ENCODE measurements at regions of chr7 and their contacts with region 1.

Region 1: GRCh38 chr7:134316539-134317344 is at the start of gene SLC35B4:
- DNase-seq: peak; percentile 90 to 96 (median 93)
- H3K4me3 ChIP-seq: peak within 1 kb of the TSS; percentile 2 to 81
- H3K4me3 Mint-ChIP-seq: peak within 1 kb of the TSS; percentile 95 to 98 (median 96)
- H3K27ac ChIP-seq: peak within 1 kb of the TSS; percentile 59
- H3K27ac Mint-ChIP-seq: peak within 1 kb of the TSS; percentile 83 to 97 (median 92)
- H3K4me1 ChIP-seq: peaks cover 17% of the 10 kb centered on the region
- H3K4me1 Mint-ChIP-seq: peaks cover 12 to 24% (median 17%) of the 10 kb centered on the region in 4 donors
- H3K27me3 ChIP-seq: no peaks in the 10 kb centered on the region
- H3K27me3 Mint-ChIP-seq: peaks cover 2% of the 10 kb centered on the region in 2 donors
- total RNA-seq, gene SLC35B4: 10.5 to 10.7 TPM

Region 2: DNA sequence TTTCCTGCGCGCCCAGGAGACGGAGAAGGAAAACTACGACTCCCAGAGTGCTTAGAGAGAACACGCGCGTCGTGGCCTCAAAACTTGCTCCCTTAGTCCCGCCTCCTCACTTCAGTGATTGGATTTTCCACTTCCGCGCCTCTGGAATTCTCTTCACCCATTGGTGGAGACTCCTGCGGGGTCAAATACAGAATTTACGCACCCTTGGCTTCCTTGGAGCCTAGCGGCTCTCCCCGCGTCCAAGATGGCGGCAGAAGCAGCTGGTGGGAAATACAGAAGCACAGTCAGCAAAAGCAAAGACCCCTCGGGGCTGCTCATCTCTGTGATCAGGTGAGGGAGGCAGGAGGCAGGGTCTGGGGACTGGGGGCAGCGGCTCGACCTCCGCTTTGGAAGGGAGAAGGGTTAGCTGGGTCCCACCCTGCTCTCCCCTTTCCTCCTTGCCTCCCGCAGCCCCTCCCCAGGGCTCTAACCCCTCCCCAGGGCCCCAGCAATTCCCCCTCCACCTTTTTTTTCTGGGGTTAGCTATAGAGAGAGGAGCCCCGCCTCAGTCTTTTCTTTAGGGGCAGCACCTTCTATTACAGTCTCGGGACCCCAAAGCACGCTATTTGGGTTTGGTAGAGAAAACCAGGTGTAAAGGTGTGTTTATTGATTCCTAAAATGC is 1063.8 kb before region 1 on chr7 and contains the start of gene EXOC4:
- CTCF ChIA-PET with region 1: no interaction called
- POLR2A ChIA-PET with region 1: no interaction called
- intact Hi-C with region 1: loop called (anchors 2 kb)
- DNase-seq: peak; percentile 95 to 97 (median 96)
- H3K4me3 ChIP-seq: peak within 1 kb of the TSS; percentile 73 to 97
- H3K4me3 Mint-ChIP-seq: peak within 1 kb of the TSS; percentile 93 to 97 (median 96)
- H3K27ac ChIP-seq: peak within 1 kb of the TSS; percentile 82
- H3K27ac Mint-ChIP-seq: peak within 1 kb of the TSS; percentile 83 to 98 (median 97)
- H3K4me1 ChIP-seq: peaks cover 25% of the 10 kb centered on the region
- H3K4me1 Mint-ChIP-seq: peaks cover 25 to 48% (median 36%) of the 10 kb centered on the region in 4 donors
- H3K27me3 ChIP-seq: no peaks in the 10 kb centered on the region
- H3K27me3 Mint-ChIP-seq: no peaks in the 10 kb centered on the region
- total RNA-seq, gene EXOC4: 68.9 to 81.2 TPM

Region 3: DNA sequence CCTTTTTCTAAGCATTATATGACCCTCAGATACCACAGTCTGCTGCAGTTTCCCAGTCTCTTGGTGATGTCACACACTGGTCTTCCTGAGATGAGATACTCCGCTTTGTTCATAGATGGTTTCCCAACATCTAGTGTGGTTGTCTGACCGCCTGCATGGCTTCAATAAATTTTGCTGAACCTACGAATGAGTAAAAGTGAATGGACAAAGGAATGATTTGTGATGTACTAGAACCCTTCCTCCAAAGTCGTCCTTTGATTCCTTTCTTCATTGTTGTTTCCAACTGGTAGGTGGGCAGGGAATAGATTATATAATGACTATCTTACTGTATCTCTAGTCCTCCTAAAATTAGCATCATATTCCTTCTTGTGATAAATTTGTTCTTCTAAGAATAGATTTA is 82.5 kb before region 1 on chr7:
- CTCF ChIA-PET with region 1: no interaction called
- POLR2A ChIA-PET with region 1: no interaction called
- intact Hi-C with region 1: no loop called
- DNase-seq: no peak
- H3K4me3 ChIP-seq: no peak overlapping the region
- H3K4me3 Mint-ChIP-seq: no peak overlapping the region
- H3K27ac ChIP-seq: no peak overlapping the region
- H3K27ac Mint-ChIP-seq: no peak overlapping the region
- H3K4me1 ChIP-seq: no peaks in the 10 kb centered on the region
- H3K4me1 Mint-ChIP-seq: no peaks in the 10 kb centered on the region
- H3K27me3 ChIP-seq: no peaks in the 10 kb centered on the region
- H3K27me3 Mint-ChIP-seq: peaks cover 6 to 8% of the 10 kb centered on the region in 2 donors

Region 4: DNA sequence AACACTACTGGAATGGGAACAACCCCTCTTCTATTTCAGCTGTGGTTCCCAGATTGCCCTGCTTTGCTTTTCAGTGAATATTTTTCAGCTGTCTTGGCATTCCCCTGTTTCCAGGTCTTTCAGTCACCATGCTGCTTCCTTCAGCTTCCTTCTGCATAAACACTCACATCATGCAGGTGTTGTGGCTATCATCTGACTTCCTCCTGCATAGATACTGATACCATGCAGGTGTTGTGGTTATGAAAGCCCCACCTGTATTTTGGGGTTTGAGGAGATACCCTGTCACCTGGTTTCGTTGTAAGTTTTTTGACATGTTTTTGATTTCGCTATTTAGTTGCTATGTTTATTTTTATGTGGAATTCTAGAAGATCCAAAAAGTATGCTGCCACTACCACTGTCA is 71.5 kb before region 1 on chr7:
- CTCF ChIA-PET with region 1: no interaction called
- POLR2A ChIA-PET with region 1: no interaction called
- intact Hi-C with region 1: no loop called
- DNase-seq: no peak
- H3K4me3 ChIP-seq: no peak overlapping the region
- H3K4me3 Mint-ChIP-seq: no peak overlapping the region
- H3K27ac ChIP-seq: no peak overlapping the region
- H3K27ac Mint-ChIP-seq: no peak overlapping the region
- H3K4me1 ChIP-seq: no peaks in the 10 kb centered on the region
- H3K4me1 Mint-ChIP-seq: no peaks in the 10 kb centered on the region
- H3K27me3 ChIP-seq: no peaks in the 10 kb centered on the region
- H3K27me3 Mint-ChIP-seq: peaks cover 0 to 10% of the 10 kb centered on the region in 2 donors

Region 5: GRCh38 chr7:134276951-134277350 is 39.8 kb before region 1 on chr7:
- CTCF ChIA-PET with region 1: no interaction called
- POLR2A ChIA-PET with region 1: no interaction called
- intact Hi-C with region 1: no loop called
- DNase-seq: no peak
- H3K4me3 ChIP-seq: no peak overlapping the region
- H3K4me3 Mint-ChIP-seq: no peak overlapping the region
- H3K27ac ChIP-seq: no peak overlapping the region
- H3K27ac Mint-ChIP-seq: no peak overlapping the region
- H3K4me1 ChIP-seq: no peaks in the 10 kb centered on the region
- H3K4me1 Mint-ChIP-seq: peaks cover 0 to 4% (median 1%) of the 10 kb centered on the region in 4 donors
- H3K27me3 ChIP-seq: no peaks in the 10 kb centered on the region
- H3K27me3 Mint-ChIP-seq: peaks cover 18 to 19% of the 10 kb centered on the region in 2 donors

Region 6: DNA sequence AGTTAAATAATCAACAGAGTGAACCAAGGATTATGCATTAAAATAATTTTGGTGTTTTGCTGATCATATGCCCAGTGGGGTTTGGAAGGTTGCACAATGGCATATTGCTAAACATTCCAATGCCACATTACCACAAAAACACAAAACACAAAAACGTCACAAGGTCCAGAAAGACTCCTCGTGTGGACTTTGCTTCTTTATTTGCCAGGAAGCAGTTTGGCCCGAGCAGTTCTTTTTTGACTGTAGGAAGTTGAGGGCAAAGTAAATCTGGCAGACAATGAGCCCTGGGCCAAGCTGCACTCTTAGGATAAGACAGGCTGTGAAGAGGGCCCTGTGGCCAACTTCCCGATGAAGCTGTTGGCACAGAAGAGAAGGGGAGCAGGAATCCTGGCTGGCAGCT is 39.2 kb after region 1 on chr7:
- CTCF ChIA-PET with region 1: interaction called, 4 read pairs
- POLR2A ChIA-PET with region 1: no interaction called
- intact Hi-C with region 1: loop called (anchors 1 kb)
- DNase-seq: no peak
- H3K4me3 ChIP-seq: no peak overlapping the region
- H3K4me3 Mint-ChIP-seq: no peak overlapping the region
- H3K27ac ChIP-seq: no peak overlapping the region
- H3K27ac Mint-ChIP-seq: peak overlapping the region in 1 of 7 donors; percentile 38
- H3K4me1 ChIP-seq: no peaks in the 10 kb centered on the region
- H3K4me1 Mint-ChIP-seq: peaks cover 0 to 2% (median 0%) of the 10 kb centered on the region in 4 donors
- H3K27me3 ChIP-seq: no peaks in the 10 kb centered on the region
- H3K27me3 Mint-ChIP-seq: peaks cover 4 to 5% of the 10 kb centered on the region in 2 donors

Region 7: DNA sequence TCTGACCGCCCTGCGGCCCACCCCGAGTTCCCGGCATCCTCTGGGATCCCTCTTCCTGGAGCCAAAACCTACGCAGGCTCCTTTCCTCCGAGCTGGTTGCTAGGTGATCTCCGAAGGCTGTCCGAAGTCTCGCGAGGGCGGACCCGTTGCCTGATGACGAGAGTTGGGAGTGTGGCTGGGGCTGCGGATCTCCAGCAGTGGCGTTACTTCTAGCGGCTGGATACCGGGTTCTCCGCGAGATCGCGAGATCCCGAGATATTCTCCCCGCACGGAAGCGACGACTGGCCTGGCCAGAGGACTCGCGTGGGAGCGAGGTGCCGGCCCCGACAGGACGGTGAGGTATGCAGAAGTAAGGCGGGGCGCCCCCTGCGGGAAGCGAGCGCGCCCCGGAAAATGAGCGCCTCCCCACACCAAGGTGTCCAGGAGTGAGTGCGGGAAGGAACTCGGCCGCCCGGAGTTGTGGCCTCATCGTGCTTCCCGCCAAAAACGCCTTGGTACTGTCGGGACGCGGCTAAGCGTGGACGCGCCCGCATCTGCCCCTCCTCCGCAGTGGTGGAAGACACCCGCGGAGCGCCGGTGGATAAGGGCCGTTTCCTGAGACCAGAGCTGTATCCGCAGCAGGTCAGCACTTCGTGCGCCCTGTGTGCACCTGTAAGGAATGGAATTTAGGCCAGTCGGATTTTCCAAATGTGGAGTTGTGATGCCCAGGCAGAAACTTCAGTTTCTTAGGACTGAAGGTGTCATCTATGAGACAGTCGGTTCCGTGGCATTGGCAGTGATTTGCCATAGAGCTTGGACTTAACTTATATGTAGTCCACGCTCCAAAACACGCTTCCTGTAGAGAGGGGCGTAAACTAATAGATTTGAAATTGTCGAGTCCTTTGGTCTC is 669.9 kb after region 1 on chr7 and contains the start of gene AGBL3:
- CTCF ChIA-PET with region 1: interaction called, 4 read pairs
- POLR2A ChIA-PET with region 1: no interaction called
- intact Hi-C with region 1: loop called (anchors 1 kb)
- DNase-seq: peak; percentile 87 to 91 (median 88)
- H3K4me3 ChIP-seq: peak within 1 kb of the TSS; percentile 60 to 86
- H3K4me3 Mint-ChIP-seq: peak within 1 kb of the TSS; percentile 96 to 99 (median 98)
- H3K27ac ChIP-seq: peak within 1 kb of the TSS; percentile 80
- H3K27ac Mint-ChIP-seq: peak within 1 kb of the TSS; percentile 98 to 100 (median 98)
- H3K4me1 ChIP-seq: peaks cover 20% of the 10 kb centered on the region
- H3K4me1 Mint-ChIP-seq: peaks cover 26 to 41% (median 31%) of the 10 kb centered on the region in 4 donors
- H3K27me3 ChIP-seq: no peaks in the 10 kb centered on the region
- H3K27me3 Mint-ChIP-seq: no peaks in the 10 kb centered on the region
- total RNA-seq, gene AGBL3: 5.5 to 6.2 TPM

Region 8: DNA sequence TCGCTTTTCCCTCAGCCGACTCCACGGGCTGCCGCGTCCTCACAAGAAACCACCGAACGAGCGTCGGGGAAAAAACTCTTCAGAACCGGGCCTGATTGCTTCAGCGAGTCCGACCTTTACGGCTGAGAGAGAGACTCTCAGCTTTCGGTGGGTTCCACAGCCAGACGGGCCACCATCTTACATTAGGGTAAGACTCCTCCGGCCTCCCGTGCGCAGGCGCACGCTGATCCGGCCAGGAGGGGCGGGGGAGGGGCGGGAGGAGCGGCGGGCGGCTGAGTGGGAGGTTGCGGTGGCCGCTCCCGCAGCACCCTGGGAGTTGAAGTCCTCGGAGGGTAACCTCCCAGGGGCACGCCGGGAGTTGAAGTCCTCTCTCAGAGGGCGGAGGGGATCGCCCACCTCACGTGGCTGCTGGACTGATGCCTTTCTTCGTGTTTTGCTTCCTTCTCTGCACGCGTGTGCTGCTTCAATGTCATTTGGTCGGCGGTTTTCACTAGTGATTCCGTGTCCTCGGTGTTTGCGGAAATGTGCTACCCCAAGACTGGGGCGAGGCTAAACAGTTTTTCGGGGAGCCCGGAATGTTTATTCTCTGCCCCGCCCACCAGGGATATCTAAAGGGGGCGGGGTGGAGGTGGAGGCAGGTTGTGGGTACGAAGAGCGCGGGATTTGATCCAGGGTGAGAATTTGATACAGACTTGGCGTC is 1193.3 kb after region 1 on chr7 and contains the start of gene CNOT4:
- CTCF ChIA-PET with region 1: no interaction called
- POLR2A ChIA-PET with region 1: no interaction called
- intact Hi-C with region 1: loop called (anchors 2 kb)
- DNase-seq: peak; percentile 91 to 98 (median 95)
- H3K4me3 ChIP-seq: peak within 1 kb of the TSS; percentile 73 to 85
- H3K4me3 Mint-ChIP-seq: no peak within 1 kb of the TSS
- H3K27ac ChIP-seq: peak within 1 kb of the TSS; percentile 95
- H3K27ac Mint-ChIP-seq: no peak within 1 kb of the TSS
- H3K4me1 ChIP-seq: peaks cover 34% of the 10 kb centered on the region
- H3K4me1 Mint-ChIP-seq: peaks cover 2 to 12% (median 6%) of the 10 kb centered on the region in 4 donors
- H3K27me3 ChIP-seq: no peaks in the 10 kb centered on the region
- H3K27me3 Mint-ChIP-seq: no peaks in the 10 kb centered on the region
- total RNA-seq, gene CNOT4: 33.9 to 35.0 TPM

Region 9: GRCh38 chr7:135977007-135977741 is 1660.4 kb after region 1 on chr7 and contains the start of gene MTPN:
- CTCF ChIA-PET with region 1: no interaction called
- POLR2A ChIA-PET with region 1: no interaction called
- intact Hi-C with region 1: loop called (anchors 5 kb)
- DNase-seq: peak; percentile 95 to 98 (median 97)
- H3K4me3 ChIP-seq: peak within 1 kb of the TSS; percentile 82 to 90
- H3K4me3 Mint-ChIP-seq: peak within 1 kb of the TSS; percentile 89 to 100 (median 96)
- H3K27ac ChIP-seq: peak within 1 kb of the TSS; percentile 93
- H3K27ac Mint-ChIP-seq: peak within 1 kb of the TSS; percentile 89 to 98 (median 95)
- H3K4me1 ChIP-seq: peaks cover 88% of the 10 kb centered on the region
- H3K4me1 Mint-ChIP-seq: peaks cover 59 to 94% (median 76%) of the 10 kb centered on the region in 4 donors
- H3K27me3 ChIP-seq: no peaks in the 10 kb centered on the region
- H3K27me3 Mint-ChIP-seq: no peaks in the 10 kb centered on the region
- total RNA-seq, gene MTPN: 83.1 to 84.5 TPM

Measured in CD4-positive, alpha-beta memory T cell (primary cell).